HepG2 (cell line): ENCODE measurements at regions of chr9 and their contacts with region 1.

Region 1: GRCh38 chr9:3920604-3921582 is 379.0 kb downstream of the GLIS3 start:
- DNase-seq: peak; percentile 83
- ATAC-seq: peak; percentile 97
- H3K4me3 ChIP-seq: peak overlapping the region in 2 of 3 experiments; percentile 24 to 35; a peak in 2 of 6 replicates
- H3K27ac ChIP-seq: peak overlapping the region; percentile 88
- H3K4me1 ChIP-seq: peaks cover 79% of the 10 kb centered on the region
- H3K27me3 ChIP-seq: no peaks in the 10 kb centered on the region
- CTCF ChIP-seq: no peak
- EP300 ChIP-seq: peak in 1 of 2 experiments; percentile 79; a peak in 2 of 4 replicates
- POLR2A ChIP-seq: no peak
- RAD21 ChIP-seq: no peak

Region 2: DNA sequence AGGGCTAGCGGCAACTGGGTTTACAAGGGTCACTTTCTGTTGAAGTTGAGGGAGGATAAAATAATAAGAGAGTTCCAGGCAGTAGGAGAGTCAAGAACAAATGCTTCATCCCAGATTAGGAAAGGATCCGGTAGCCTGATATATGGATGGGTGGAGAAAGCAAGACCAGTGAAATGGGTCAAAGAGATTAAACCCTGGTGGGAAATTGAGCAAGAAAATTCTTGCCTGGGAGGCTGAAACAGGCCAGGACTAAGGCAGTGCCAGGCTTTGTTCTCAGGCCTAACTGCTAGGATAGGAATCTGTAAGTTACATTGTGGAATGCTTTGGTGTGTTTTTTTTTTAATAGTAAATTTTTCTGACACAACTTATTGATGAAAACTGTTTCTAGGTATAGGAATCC is 137.7 kb before region 1 on chr9:
- CTCF ChIA-PET with region 1: no interaction called
- POLR2A ChIA-PET with region 1: no interaction called
- in situ Hi-C with region 1: no loop called
- intact Hi-C with region 1: no loop called
- DNase-seq: no peak
- ATAC-seq: no peak
- H3K4me3 ChIP-seq: no peak overlapping the region
- H3K27ac ChIP-seq: no peak overlapping the region
- H3K4me1 ChIP-seq: no peaks in the 10 kb centered on the region
- H3K27me3 ChIP-seq: no peaks in the 10 kb centered on the region
- CTCF ChIP-seq: no peak
- EP300 ChIP-seq: no peak
- POLR2A ChIP-seq: no peak
- RAD21 ChIP-seq: no peak

Region 3: GRCh38 chr9:3903273-3903672 is 17.6 kb before region 1 on chr9:
- CTCF ChIA-PET with region 1: no interaction called
- POLR2A ChIA-PET with region 1: no interaction called
- in situ Hi-C with region 1: no loop called
- intact Hi-C with region 1: loop called (anchors 1 kb)
- DNase-seq: peak; percentile 89
- ATAC-seq: peak; percentile 100
- H3K4me3 ChIP-seq: no peak overlapping the region
- H3K27ac ChIP-seq: peak overlapping the region; percentile 43
- H3K4me1 ChIP-seq: peaks cover 37% of the 10 kb centered on the region
- H3K27me3 ChIP-seq: no peaks in the 10 kb centered on the region
- CTCF ChIP-seq: peak; percentile 29
- EP300 ChIP-seq: peak in 1 of 2 experiments; percentile 76; a peak in 2 of 4 replicates
- POLR2A ChIP-seq: no peak
- RAD21 ChIP-seq: no peak

Region 4: DNA sequence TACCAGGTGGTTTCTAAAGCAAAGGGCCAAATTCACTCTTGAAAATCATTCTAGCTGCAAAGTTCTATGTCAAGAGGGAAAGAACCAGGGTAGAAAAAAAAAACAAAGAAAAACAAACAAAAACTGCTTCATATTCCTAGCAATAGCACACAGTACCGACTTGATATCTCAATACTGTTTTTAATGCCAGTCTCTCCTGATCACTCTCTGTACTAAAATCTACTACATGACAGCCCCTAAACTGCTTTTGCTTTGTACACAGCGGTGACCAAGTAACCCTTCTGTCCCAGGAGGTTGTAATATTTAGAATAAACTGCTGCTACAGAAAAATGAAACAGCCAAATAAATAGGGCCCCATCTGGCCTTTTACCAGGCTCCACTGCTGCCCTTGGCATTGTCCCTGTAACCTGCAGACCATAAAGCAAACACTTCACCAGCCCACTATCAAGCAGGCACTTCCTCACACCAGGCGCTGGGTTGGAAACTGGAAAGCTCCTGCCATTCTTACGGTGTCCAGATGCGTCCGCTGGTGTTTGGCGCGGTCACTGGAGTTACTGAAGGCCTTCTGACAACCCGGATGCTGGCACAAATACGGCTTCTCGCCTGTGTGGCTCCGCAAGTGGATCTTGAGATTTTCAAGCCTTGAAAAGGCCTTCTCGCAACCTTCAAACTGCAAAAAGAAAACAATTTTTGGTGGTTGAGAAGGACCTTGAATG is 15.8 kb after region 1 on chr9:
- CTCF ChIA-PET with region 1: no interaction called
- POLR2A ChIA-PET with region 1: no interaction called
- in situ Hi-C with region 1: no loop called
- intact Hi-C with region 1: no loop called
- DNase-seq: no peak
- ATAC-seq: no peak
- H3K4me3 ChIP-seq: no peak overlapping the region
- H3K27ac ChIP-seq: no peak overlapping the region
- H3K4me1 ChIP-seq: no peaks in the 10 kb centered on the region
- H3K27me3 ChIP-seq: no peaks in the 10 kb centered on the region
- CTCF ChIP-seq: no peak
- EP300 ChIP-seq: no peak
- POLR2A ChIP-seq: no peak
- RAD21 ChIP-seq: no peak

Region 5: GRCh38 chr9:3962971-3963642 is 42.2 kb after region 1 on chr9:
- CTCF ChIA-PET with region 1: no interaction called
- POLR2A ChIA-PET with region 1: interaction called, 4 read pairs
- in situ Hi-C with region 1: no loop called
- intact Hi-C with region 1: loop called (anchors 2 kb)
- DNase-seq: no peak
- ATAC-seq: no peak
- H3K4me3 ChIP-seq: no peak overlapping the region
- H3K27ac ChIP-seq: no peak overlapping the region
- H3K4me1 ChIP-seq: peaks cover 16% of the 10 kb centered on the region
- H3K27me3 ChIP-seq: no peaks in the 10 kb centered on the region
- CTCF ChIP-seq: no peak
- EP300 ChIP-seq: no peak
- POLR2A ChIP-seq: no peak
- RAD21 ChIP-seq: no peak

Region 6: DNA sequence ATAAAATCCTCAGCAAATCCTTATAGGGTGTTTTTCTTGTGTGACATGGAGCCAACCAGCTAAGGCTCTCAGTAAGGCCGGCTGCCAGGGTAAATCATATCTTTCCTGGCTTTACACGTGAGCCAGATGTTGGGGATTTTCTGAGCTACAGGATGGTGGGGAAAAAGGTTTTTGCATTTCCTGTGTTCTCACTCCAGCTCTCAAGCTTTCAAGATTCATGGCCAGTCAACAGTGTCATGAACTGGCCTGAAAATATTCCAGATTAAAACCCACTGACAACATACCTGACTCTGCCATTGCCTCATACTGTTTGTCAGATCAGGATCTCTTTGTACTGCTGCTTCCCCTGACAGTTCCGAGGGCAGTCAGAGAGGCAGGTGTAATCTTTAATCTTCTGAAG is 72.0 kb after region 1 on chr9:
- CTCF ChIA-PET with region 1: no interaction called
- POLR2A ChIA-PET with region 1: no interaction called
- in situ Hi-C with region 1: no loop called
- intact Hi-C with region 1: no loop called
- DNase-seq: no peak
- ATAC-seq: peak; percentile 47; the same call in 1 of the 3 replicates
- H3K4me3 ChIP-seq: no peak overlapping the region
- H3K27ac ChIP-seq: no peak overlapping the region
- H3K4me1 ChIP-seq: no peaks in the 10 kb centered on the region
- H3K27me3 ChIP-seq: no peaks in the 10 kb centered on the region
- CTCF ChIP-seq: no peak
- EP300 ChIP-seq: no peak
- POLR2A ChIP-seq: no peak
- RAD21 ChIP-seq: no peak

Region 7: DNA sequence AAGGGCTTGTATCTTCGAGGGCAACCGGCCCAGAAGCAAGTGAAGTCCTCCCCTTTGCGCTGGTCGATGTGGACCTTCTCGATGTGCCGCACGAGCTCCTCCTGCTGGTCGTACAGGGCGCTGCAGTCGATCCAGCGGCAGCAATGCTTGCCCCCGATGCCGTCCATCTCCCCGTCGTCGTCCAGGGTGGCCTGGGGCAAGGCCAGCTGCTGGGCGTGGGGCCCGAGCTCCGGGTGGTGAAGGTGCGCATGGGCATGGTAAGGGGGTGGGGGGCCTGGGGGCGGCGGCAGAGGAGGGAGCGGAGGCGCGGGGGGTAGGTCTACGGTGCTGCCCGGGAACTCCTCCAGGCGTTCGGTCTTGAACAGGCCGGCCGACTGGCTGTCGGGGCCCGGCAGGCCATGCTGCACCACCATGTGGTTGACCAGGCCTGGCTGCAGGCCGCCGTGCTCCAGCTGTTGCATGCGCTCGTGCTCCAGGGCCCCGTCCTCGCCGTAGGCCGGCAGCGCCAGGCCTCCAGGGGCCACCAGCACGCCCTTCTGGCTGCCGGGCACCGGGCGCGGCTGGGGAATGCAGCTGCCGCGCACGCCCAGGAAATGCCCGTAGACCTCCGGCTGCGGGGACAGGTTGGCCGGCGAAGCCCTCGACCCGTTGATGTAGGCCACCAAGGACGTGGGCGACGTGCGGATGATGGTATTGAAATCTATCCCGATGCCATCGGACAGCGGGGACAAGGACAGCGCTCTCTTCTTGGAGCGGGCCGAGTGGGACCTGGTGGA is 197.1 kb after region 1 on chr9:
- CTCF ChIA-PET with region 1: no interaction called
- POLR2A ChIA-PET with region 1: no interaction called
- in situ Hi-C with region 1: no loop called
- intact Hi-C with region 1: no loop called
- DNase-seq: peak; percentile 9
- ATAC-seq: peak; percentile 85
- H3K4me3 ChIP-seq: no peak overlapping the region
- H3K27ac ChIP-seq: no peak overlapping the region
- H3K4me1 ChIP-seq: no peaks in the 10 kb centered on the region
- H3K27me3 ChIP-seq: no peaks in the 10 kb centered on the region
- CTCF ChIP-seq: peak; percentile 89
- EP300 ChIP-seq: no peak
- POLR2A ChIP-seq: no peak
- RAD21 ChIP-seq: peak; percentile 76